OCI-LY7 (cell line): ENCODE measurements at regions of chr16 and their contacts with region 1.

Region 1: DNA sequence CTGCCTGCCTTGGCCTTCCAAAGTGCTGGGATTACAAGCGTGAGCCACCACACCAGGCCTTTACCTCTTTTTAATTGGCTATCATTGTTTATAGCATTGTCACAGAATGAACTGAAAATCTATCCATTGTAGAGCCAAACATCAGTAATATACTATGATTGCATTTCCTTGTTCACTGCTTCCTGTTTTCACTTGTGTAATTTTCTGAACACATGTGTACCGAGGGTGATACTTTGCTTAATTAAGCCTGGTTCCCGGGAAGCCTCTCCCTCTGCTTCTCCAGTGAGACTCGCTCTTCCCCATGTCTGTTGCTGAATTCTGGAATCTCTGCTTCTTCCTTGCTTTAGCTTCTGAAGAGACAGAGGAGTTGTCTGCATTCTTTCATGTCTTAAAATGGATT is 33.1 kb downstream of the POLR3E start:
- DNase-seq: no peak
- H3K4me3 ChIP-seq: no peak overlapping the region
- H3K27ac ChIP-seq: no peak overlapping the region
- H3K4me1 ChIP-seq: no peaks in the 10 kb centered on the region
- CTCF ChIP-seq: no peak

Region 2: DNA sequence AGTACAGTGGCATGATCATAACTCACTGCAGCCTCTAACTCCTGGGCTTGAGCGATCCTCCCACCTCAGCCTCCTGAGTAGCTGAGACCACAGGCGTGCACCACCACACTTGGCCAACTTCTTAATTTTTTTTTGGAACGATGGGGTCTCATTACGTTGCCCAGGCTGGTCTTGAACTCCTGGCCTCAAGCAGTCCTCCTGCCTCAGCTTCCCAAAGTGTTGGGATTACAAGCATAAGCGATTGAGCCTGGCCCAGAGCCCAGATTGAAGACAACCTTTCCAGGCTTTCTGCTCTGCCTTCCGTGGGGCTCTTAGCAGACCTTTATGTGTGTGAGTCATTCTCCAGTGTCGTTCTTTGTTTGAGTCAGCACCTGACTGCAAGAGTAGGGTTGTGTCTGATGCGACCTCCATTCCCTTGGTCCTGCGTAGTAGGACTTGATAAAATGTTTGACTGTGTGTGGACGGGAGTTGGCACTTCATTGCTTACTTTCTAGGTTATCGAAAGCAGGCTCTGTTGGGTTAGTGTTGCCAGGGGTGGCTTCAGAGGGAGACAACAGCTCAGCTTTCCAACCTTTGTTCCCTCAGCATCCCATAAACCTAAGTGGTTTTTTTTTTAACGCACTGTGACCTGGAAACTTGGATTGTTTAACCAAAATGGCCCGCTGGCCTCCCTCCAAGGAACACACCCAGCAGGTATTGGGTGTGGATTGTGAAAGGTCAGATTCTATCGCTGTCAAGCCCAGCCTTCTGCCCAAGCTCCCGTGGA is 97.9 kb before region 1 on chr16:
- CTCF ChIA-PET with region 1: no interaction called
- POLR2A ChIA-PET with region 1: interaction called, 15 read pairs
- intact Hi-C with region 1: no loop called
- DNase-seq: no peak
- H3K4me3 ChIP-seq: no peak overlapping the region
- H3K27ac ChIP-seq: no peak overlapping the region
- H3K4me1 ChIP-seq: no peaks in the 10 kb centered on the region
- CTCF ChIP-seq: no peak

Region 3: GRCh38 chr16:22307838-22308237 is 22.5 kb before region 1 on chr16:
- CTCF ChIA-PET with region 1: no interaction called
- POLR2A ChIA-PET with region 1: no interaction called
- intact Hi-C with region 1: no loop called
- DNase-seq: no peak
- H3K4me3 ChIP-seq: no peak overlapping the region
- H3K27ac ChIP-seq: no peak overlapping the region
- H3K4me1 ChIP-seq: no peaks in the 10 kb centered on the region
- CTCF ChIP-seq: no peak